SK-N-SH (cell line): ENCODE measurements at regions of chr19 and their contacts with region 1.

Region 1: GRCh38 chr19:2578901-2579677 is 103.2 kb downstream of the GADD45B start:
- DNase-seq: peak; percentile 90
- H3K4me3 ChIP-seq: peak overlapping the region; percentile 46 to 75
- H3K27ac ChIP-seq: peak overlapping the region; percentile 74 to 86
- H3K4me1 ChIP-seq: peaks cover 7 to 12% of the 10 kb centered on the region in 2 experiments; a peak in 3 of 4 replicates
- H3K27me3 ChIP-seq: no peaks in the 10 kb centered on the region
- CTCF ChIP-seq: peak; percentile 90
- EP300 ChIP-seq: peak in 1 of 2 experiments; percentile 85; a peak in 2 of 4 replicates
- RAD21 ChIP-seq: peak; percentile 84

Region 2: DNA sequence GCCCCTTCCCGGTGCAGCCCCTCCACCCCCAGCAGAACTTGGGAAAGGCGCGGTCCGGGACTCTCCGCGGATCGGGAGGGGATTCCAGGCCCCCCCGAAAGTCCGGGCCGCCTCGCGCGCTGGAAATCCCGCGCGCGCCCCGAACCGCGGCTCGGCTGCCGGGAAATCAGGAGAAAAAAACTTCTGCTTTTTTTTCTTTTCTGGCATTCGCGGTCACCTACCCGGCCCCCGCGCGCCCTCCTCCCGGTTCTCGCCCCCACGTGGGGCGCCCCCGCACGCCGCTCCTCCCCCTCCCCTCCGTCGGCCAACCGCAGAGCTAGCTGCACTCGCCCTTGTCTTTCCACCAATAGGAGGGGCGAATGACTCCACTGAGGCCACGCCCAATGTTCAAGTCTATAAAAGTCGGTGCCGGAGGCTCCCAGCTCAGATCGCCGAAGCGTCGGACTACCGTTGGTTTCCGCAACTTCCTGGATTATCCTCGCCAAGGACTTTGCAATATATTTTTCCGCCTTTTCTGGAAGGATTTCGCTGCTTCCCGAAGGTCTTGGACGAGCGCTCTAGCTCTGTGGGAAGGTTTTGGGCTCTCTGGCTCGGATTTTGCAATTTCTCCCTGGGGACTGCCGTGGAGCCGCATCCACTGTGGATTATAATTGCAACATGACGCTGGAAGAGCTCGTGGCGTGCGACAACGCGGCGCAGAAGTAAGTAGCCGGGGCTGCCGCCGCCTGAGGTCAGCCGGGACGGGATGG is 103.2 kb before region 1 on chr19 and contains the start of gene GADD45B:
- CTCF ChIA-PET with region 1: interaction called, 46 read pairs
- POLR2A ChIA-PET with region 1: interaction called, 15 read pairs
- DNase-seq: peak; percentile 99
- H3K4me3 ChIP-seq: peak within 1 kb of the TSS; percentile 67 to 100
- H3K27ac ChIP-seq: peak within 1 kb of the TSS; percentile 44 to 88; a peak in 3 of 4 replicates
- H3K4me1 ChIP-seq: peaks cover 6 to 27% of the 10 kb centered on the region in 2 experiments; a peak in 1 of 4 replicates
- H3K27me3 ChIP-seq: no peaks in the 10 kb centered on the region
- CTCF ChIP-seq: no peak
- EP300 ChIP-seq: peak in 1 of 2 experiments; percentile 59; a peak in 2 of 4 replicates
- RAD21 ChIP-seq: no peak
- polyA plus RNA-seq, gene GADD45B: 54.0 and 67.6 TPM in 2 replicates

Region 3: DNA sequence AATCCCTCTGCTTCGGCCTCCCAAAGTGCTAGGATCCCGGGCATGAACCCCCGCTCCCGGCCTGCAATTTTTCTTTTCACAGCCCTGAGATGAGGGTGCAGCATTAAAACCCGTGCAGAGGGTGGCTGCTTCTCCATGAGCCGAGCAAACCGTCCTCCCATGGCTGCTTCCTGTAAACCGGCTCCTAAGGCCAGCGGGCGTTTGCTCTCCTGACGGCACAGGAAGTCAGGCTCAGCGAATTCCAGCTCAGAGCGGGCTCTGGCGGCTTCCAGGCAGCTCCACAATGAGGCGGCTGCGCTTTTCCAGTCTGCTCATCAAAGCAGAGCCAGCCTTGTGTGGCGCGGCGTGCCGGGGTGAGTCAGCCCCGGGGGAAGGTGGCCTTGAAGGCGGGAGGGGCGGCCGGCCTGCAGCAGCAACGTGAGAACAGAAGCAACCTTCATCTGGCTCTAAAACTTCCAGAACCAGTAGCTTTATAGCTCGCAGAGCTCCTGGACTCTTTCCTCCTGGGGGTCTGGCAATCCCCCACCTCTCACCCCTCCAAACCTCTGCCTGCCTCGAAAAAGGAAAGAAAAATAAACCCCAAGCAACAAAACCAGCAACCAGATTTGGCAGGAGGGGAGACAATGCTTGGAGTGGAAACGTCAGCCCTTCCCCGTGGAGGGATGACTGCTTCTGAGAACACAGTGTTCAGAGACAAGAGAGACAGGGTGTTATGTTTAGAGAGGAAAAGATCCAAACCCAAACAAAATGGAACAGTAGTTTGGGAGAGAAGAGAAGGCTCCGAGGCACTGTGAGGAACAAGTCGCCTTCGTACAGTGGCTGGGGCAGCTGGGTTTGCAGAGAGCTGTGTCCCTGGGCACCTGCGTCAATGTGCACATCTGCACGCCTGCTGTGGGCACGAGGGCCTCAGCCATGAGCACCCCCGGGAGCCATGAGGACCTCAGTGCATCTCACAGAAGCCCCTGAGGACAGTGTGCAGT is 35.3 kb before region 1 on chr19:
- CTCF ChIA-PET with region 1: interaction called, 25 read pairs
- POLR2A ChIA-PET with region 1: no interaction called
- DNase-seq: peak; percentile 91
- H3K4me3 ChIP-seq: peak overlapping the region; percentile 7 to 22; a peak in 2 of 4 replicates
- H3K27ac ChIP-seq: peak overlapping the region; percentile 86 to 90
- H3K4me1 ChIP-seq: peaks cover 13 to 43% of the 10 kb centered on the region in 2 experiments; a peak in 3 of 4 replicates
- H3K27me3 ChIP-seq: no peaks in the 10 kb centered on the region
- CTCF ChIP-seq: peak; percentile 41
- EP300 ChIP-seq: peak; percentile 21 to 83; a peak in 1 of 4 replicates
- RAD21 ChIP-seq: peak; percentile 55

Region 4: DNA sequence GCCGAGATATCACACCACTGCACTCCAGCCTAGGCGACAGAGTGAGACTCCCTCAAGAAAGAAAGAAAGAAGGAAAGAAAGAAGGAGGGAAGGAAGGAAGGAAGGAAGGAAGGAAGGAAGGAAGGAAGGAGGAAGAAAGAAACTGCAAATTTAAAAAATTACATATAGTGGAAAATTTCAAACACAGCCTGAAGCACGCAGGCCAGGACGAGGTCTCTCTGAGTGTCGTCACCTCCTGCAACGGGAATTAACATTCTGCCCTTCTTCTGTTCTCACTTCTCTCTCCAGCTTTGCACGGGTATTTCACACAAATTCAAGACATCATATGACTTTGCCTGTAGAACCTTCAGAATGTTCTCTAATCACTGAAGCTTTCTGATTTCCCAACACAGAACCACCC is 15.2 kb after region 1 on chr19:
- CTCF ChIA-PET with region 1: interaction called, 35 read pairs
- POLR2A ChIA-PET with region 1: no interaction called
- DNase-seq: no peak
- H3K4me3 ChIP-seq: no peak overlapping the region
- H3K27ac ChIP-seq: no peak overlapping the region
- H3K4me1 ChIP-seq: peaks cover 0 to 4% of the 10 kb centered on the region in 2 experiments; a peak in 1 of 4 replicates
- H3K27me3 ChIP-seq: no peaks in the 10 kb centered on the region
- CTCF ChIP-seq: no peak
- EP300 ChIP-seq: no peak
- RAD21 ChIP-seq: no peak

Region 5: GRCh38 chr19:2610637-2611482 is 31.8 kb after region 1 on chr19:
- CTCF ChIA-PET with region 1: interaction called, 57 read pairs
- POLR2A ChIA-PET with region 1: no interaction called
- DNase-seq: peak; percentile 92
- H3K4me3 ChIP-seq: peak overlapping the region; percentile 26 to 55; a peak in 2 of 4 replicates
- H3K27ac ChIP-seq: peak overlapping the region; percentile 40 to 63; a peak in 3 of 4 replicates
- H3K4me1 ChIP-seq: peaks cover 0 to 2% of the 10 kb centered on the region in 2 experiments; a peak in 1 of 4 replicates
- H3K27me3 ChIP-seq: no peaks in the 10 kb centered on the region
- CTCF ChIP-seq: peak; percentile 94
- EP300 ChIP-seq: no peak
- RAD21 ChIP-seq: peak; percentile 94

Region 6: DNA sequence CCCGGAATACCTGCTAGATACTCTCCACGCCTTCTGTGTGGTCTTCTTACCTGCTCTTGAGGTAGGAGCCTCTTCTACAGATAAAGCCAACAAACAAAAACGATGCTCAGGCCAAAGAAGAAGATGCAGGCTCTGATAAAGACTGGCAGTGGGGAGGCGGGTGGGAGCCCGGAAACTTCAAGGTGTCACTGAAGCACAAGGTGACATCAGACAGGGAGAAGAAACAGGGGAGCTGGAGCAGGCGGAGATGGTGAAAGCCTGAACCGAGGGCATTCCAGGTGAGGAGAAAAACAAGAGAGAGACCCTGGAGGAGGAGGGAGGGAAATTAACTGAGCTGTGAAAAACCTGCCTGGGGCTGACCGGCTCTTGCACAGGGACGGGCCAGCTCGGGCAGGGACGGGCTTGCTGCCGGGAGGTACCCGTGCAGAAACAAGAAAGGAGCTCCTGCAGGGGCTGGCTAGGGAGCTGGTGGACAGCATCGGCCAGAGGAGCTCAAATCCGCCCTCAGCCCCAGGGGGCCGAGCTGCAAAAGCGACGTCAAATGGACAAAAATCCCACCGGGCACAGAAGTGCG is 104.4 kb after region 1 on chr19:
- CTCF ChIA-PET with region 1: no interaction called
- POLR2A ChIA-PET with region 1: no interaction called
- DNase-seq: no peak
- H3K4me3 ChIP-seq: no peak overlapping the region
- H3K27ac ChIP-seq: no peak overlapping the region
- H3K4me1 ChIP-seq: no peaks in the 10 kb centered on the region
- H3K27me3 ChIP-seq: no peaks in the 10 kb centered on the region; the same call in 1 of the 2 replicates
- CTCF ChIP-seq: no peak
- EP300 ChIP-seq: no peak
- RAD21 ChIP-seq: no peak